ENCODE measurements at regions of chr16 and their contacts with region 1.

Region 1: DNA sequence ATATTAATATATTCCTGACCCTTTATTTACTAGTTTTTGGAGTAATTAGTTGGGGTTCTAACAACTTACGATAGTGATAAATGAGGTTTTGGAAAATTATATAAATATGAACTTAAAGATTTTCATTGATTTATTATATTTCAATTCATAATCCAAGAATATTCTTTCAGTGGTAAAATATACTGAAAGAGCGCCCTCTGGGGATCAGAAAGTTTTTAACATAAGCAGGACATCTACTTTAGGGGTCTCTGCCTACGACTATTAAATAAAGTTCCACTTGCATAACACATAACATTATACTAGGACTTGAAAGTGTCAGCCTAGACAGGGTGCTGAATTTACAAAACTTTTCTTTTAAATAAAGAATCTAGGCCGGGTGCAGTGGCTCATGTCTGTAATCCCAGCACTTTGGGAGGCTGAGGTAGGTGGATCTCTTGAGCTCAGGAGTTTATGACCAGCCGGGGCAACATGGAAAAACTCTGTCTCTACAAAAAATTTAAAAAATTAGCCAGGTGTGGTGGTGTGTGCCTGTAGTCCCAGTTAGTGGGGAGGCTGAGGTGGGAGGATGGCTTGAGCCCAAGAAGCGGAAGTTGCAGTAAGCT is 15.6 kb downstream of the RFWD3 start:
- DNase-seq: no peak
- ATAC-seq: no peak
- H3K4me3 Mint-ChIP-seq: no peak overlapping the region
- H3K27ac Mint-ChIP-seq: no peak overlapping the region
- H3K4me1 Mint-ChIP-seq: peaks cover 27% of the 10 kb centered on the region
- H3K27me3 Mint-ChIP-seq: no peaks in the 10 kb centered on the region
- CTCF ChIP-seq: peak; percentile 63

Region 2: DNA sequence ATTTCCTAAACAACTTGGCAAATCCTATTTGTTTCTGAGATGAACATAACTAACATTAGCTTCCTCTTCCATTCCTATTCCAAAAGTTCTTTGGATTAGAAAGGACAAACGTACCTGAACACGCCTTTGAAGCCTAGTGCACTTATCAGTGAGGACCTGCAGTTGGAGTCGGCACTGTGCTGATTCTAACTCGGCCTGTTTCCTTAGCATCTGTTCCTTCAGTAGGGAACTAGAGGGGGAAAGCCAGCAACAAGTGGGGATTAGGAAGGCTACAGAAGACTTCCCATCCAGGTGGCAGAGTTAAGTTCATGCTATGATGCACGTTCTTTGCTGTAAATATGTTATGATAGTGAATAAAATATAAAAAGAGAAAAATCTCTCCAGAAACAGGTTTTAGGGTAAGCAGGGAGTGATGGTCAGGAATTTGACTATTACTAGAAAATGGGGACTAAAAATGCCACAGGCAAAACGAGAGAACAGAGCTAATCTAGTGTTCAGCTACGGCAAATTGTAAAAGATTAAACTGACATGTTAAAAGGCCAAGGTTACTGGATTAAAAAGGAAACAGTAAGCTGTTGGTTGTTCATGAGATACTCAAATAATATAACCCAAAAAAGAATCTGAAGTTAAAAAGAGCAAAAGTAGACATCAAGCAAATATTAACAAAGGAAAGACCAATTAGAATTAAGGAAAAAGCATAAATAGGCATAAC is 13.2 kb before region 1 on chr16:
- CTCF ChIA-PET with region 1: interaction called, 10 read pairs
- POLR2A ChIA-PET with region 1: interaction called, 6 read pairs
- intact Hi-C with region 1: no loop called
- DNase-seq: no peak
- ATAC-seq: no peak
- H3K4me3 Mint-ChIP-seq: no peak overlapping the region
- H3K27ac Mint-ChIP-seq: no peak overlapping the region
- H3K4me1 Mint-ChIP-seq: peaks cover 2% of the 10 kb centered on the region
- H3K27me3 Mint-ChIP-seq: no peaks in the 10 kb centered on the region
- CTCF ChIP-seq: no peak

Measured in activated CD8-positive, alpha-beta T cell treated with anti-CD3 and anti-CD28 coated beads for 36 hours (primary cell).